ENCODE measurements at regions of chr2 and their contacts with region 1.

Region 1: DNA sequence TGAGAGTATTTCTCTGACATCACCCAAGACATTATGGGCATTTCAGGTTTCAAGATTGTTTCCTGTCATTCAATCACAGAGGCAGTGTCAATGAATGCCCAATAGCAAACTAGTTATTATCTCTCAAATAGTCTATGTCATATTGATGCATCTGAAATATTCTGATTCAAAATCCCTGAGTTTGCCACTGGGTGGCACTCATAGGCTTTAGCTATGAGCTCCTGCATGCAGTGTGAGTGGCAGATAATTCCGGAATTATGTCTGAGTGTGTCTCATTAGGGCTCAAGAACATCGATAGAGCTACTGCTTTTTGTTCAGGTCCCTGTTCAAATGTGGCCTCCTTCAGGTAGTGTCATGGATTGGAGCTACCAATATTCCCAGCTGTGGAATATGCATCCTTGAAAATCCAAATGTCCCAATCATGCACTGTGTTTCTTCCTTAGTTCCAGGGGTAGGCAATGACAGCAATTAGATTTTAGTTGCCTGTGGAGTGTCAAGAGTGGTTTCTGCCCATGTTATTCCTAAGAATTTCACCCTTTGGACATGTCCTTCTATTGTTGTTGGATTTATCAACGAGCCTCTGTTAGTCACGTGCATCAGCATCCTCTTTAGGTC is 7.8 kb upstream of the OR6B3 start:
- DNase-seq: peak; percentile 46
- CTCF ChIP-seq: peak; percentile 47

Region 2: GRCh38 chr2:240138254-240138984 is 77.3 kb after region 1 on chr2:
- CTCF ChIA-PET with region 1: interaction called, 112 read pairs
- POLR2A ChIA-PET with region 1: no interaction called
- DNase-seq: no peak
- CTCF ChIP-seq: no peak

Region 3: DNA sequence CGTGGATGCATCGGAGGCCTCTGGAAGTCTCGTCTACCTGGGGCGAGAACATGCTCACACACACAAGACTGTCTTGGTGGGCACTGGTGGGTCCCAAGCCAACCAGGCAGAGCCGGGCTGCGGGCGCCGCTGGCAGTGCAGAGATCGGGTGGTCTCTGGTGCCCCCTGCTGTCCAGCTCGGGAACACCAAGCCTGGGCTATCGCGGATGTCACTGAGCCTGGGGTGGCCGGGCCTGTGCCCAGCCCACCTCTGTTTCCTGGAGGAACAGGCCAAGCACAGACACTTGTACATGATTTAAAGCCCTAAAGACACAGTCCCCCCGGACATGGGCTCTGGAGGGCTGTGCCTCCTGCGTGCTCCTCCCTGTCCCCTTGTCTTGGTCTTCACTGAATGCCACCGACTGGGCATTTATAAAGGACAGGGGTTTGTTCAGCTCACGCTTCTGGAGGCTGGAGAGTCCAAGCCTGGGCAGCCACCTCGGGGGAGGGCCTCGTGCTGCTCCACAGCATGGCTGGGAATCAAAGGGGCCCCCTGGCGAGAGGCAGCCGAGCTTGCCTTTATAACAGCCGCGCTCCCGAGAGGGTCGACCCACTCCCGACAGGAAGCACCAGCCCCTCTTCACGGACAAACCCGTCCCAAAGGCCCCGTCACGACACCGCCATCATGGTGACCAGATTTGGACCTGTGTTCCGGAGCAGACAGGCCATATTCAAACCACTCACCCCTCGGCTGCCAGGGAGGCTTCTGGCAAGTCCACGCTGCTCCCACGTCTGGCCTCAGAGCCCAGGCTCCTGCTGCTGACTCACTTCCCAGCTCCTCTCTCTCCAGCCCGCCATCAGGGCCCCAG is 82.9 kb after region 1 on chr2:
- CTCF ChIA-PET with region 1: interaction called, 112 read pairs
- POLR2A ChIA-PET with region 1: no interaction called
- DNase-seq: peak; percentile 88
- CTCF ChIP-seq: peak; percentile 94

Region 4: DNA sequence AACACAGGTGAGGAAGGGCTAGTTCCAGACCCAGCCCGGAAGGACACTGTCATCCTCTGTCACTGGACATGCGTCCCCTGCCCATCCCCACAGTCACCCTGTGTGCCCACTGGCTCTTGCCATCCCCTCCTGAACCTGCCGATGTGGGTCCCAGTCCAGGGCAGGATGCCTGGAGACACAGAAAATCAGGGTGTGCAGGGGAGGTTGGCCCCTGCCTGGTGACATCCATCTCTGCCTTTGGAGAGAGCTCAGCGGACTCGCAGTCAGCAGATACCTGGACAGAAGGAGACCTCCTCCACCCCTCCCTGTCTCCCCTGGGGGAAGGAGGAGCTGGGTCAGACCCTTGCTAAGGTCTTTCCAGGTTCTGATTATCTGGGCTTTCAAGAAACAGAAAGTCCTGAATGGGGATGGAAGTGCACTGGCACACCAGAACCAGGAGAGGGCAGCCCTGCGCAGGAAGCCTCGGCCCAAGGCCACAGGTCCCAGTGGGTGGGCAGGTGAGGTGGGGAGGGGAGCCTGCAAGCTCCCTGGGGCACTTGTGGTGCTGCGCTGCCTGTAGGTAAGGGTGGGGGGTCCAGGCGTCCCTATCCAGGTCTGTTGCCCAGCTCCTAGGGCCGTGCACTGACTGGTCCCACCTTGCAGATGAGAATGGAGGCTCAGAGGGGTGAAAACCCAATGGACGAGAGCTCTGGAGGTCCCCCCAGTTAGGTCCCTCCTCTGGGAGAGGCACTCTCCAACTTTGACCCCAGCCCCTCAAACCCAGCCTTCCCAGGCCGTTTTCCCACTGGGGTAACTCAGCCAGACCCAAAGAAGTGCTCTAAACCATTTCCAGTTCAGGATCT is 89.1 kb after region 1 on chr2:
- CTCF ChIA-PET with region 1: interaction called, 112 read pairs
- POLR2A ChIA-PET with region 1: no interaction called
- DNase-seq: peak; percentile 76
- CTCF ChIP-seq: peak; percentile 85

Region 5: GRCh38 chr2:240161087-240161750 is 100.1 kb after region 1 on chr2:
- CTCF ChIA-PET with region 1: no interaction called
- POLR2A ChIA-PET with region 1: no interaction called
- DNase-seq: no peak
- CTCF ChIP-seq: no peak

Measured in GM10248 (cell line).